OCI-LY7 (cell line): ENCODE measurements at regions of chr11 and their contacts with region 1.

Region 1: DNA sequence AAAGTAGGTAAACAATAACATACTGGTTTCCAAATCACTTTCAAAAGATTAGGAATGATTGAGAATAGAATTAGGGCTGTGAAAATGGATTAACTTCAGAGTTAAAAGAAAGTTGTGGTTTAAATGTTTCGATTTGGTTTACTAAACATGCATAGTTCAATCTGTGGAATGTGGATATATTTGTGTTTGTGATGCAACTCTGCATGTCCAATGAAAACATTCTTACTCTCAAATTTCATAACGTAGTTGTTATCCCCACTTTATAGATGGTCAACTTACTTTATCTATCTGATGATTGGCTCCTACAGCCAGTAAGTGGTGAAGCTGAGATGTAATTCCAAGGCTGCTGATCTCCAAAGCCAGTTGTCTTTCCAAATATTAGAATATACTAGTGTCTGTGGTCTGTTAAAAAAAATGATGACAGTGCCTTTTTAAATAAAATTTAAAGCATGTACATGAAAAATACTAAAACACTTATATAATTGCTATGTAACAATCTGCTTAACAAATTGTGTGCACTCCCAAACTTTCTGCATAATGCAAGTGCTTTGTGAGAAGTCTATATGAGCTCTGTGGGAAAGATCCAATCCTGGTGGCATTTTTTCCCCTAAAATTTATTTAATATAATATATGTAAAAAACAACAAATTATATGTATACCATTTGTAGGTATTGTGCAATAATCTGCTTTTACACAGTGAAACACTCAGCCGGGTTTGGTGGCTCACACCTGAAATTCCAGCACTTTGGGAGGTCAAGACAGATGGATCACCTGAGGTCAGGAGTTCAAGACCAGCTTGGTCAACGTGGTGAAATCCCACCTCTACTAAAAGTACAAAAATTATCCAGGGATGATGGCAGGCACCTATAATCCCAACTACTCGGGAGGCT is 9.7 kb upstream of the SIK3 start:
- DNase-seq: no peak
- H3K4me3 ChIP-seq: no peak overlapping the region
- H3K27ac ChIP-seq: no peak overlapping the region
- H3K4me1 ChIP-seq: peaks cover 9% of the 10 kb centered on the region
- CTCF ChIP-seq: no peak

Region 2: DNA sequence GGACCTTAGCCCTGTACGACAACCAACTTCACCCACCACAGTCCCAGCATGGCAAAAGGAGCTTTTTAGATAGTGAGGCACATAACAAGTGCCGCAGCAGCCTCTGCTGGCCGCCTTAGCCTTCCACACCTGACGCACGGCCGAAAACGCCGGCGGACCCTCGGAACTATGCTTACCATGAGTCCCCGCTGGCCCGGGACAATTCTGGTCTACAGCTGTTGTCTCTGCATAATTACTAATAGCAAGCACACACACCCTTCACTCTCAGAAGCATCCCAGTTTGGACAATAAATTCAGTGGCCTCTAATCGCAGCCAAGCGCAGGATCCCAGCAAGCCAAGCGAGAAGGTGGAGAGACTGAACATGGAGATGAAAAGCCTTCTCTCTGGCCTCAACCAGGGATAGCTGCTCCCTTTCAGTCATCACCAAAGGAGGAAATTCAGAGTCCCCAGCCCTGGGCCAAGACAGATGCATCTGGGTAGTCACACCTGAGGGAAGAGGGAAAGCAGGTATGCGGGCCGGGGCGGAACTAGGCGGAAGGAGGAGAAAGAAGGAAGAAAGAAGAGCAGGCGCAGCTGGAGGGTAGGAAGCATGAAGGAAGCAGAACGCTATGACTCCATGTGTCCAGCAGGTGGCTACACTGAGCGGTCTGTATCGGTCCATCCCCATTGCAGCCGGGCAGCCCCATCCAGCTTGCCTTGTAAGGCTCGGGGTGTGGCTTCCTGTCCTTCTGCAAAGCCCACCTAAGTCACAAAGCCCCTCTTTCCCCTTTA is 375.5 kb before region 1 on chr11:
- CTCF ChIA-PET with region 1: no interaction called
- POLR2A ChIA-PET with region 1: no interaction called
- intact Hi-C with region 1: loop called (anchors 1 kb)
- DNase-seq: peak; percentile 73
- H3K4me3 ChIP-seq: no peak overlapping the region
- H3K27ac ChIP-seq: no peak overlapping the region
- H3K4me1 ChIP-seq: no peaks in the 10 kb centered on the region
- CTCF ChIP-seq: peak; percentile 80

Region 3: GRCh38 chr11:116835791-116836631 is 271.9 kb before region 1 on chr11:
- CTCF ChIA-PET with region 1: interaction called, 3 read pairs
- POLR2A ChIA-PET with region 1: interaction called, 4 read pairs
- intact Hi-C with region 1: loop called (anchors 1 kb)
- DNase-seq: peak; percentile 89
- H3K4me3 ChIP-seq: peak overlapping the region; percentile 41
- H3K27ac ChIP-seq: no peak overlapping the region
- H3K4me1 ChIP-seq: peaks cover 13% of the 10 kb centered on the region
- CTCF ChIP-seq: peak; percentile 75

Region 4: DNA sequence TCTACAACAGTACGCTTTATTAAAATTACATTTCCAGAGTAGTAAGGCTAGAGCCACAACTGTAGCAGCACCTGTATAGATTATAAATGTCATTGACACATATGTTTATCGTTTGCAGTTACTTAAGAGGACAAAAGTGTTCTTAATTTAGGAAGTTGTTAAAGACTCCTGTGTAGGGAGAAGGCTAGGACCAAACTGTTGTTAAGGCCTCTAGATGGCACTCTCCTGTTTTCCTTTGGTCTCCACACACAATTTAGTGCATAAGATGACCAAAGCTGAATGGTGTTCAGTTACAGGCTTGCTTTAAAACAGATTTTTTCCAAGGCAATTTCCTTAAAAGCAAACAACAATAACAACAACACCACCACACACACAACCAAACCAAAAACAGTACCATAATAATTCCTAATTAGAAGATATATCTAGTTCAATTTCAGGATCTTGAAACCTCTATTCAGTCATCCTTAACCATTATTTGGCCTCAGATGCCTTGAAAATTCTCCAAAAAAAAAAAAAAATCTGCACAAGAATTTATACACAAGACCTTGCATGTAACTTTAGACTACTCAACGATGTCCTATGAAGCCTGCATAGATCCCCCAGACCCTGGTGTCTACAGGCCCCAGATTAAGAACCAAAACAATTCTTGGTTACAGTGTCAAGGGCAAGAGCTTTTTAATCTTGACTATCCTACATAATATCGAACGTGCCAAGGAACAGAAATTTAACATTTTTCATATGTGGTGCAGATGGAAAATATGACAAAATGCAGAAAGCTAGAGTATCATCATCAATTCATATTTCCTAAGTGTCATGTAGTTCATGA is 227.9 kb before region 1 on chr11:
- CTCF ChIA-PET with region 1: interaction called, 6 read pairs
- POLR2A ChIA-PET with region 1: no interaction called
- intact Hi-C with region 1: loop called (anchors 1 kb)
- DNase-seq: peak; percentile 81
- H3K4me3 ChIP-seq: no peak overlapping the region
- H3K27ac ChIP-seq: no peak overlapping the region
- H3K4me1 ChIP-seq: peaks cover 7% of the 10 kb centered on the region
- CTCF ChIP-seq: peak; percentile 96

Region 5: GRCh38 chr11:117010808-117011540 is 97.0 kb before region 1 on chr11:
- CTCF ChIA-PET with region 1: no interaction called
- POLR2A ChIA-PET with region 1: no interaction called
- intact Hi-C with region 1: no loop called
- DNase-seq: no peak
- H3K4me3 ChIP-seq: no peak overlapping the region
- H3K27ac ChIP-seq: no peak overlapping the region
- H3K4me1 ChIP-seq: peaks cover 15% of the 10 kb centered on the region
- CTCF ChIP-seq: no peak

Region 6: GRCh38 chr11:117058761-117059261 is 49.1 kb before region 1 on chr11:
- CTCF ChIA-PET with region 1: no interaction called
- POLR2A ChIA-PET with region 1: no interaction called
- intact Hi-C with region 1: no loop called
- DNase-seq: no peak
- H3K4me3 ChIP-seq: no peak overlapping the region
- H3K27ac ChIP-seq: no peak overlapping the region
- H3K4me1 ChIP-seq: peaks cover 16% of the 10 kb centered on the region
- CTCF ChIP-seq: no peak

Region 7: GRCh38 chr11:117226388-117227385 is 118.7 kb after region 1 on chr11:
- CTCF ChIA-PET with region 1: interaction called, 3 read pairs
- POLR2A ChIA-PET with region 1: no interaction called
- intact Hi-C with region 1: loop called (anchors 1 kb)
- DNase-seq: peak; percentile 85
- H3K4me3 ChIP-seq: no peak overlapping the region
- H3K27ac ChIP-seq: no peak overlapping the region
- H3K4me1 ChIP-seq: peaks cover 21% of the 10 kb centered on the region
- CTCF ChIP-seq: peak; percentile 88